GM13977 (cell line): ENCODE measurements at regions of chr2 and their contacts with region 1.

Region 1: DNA sequence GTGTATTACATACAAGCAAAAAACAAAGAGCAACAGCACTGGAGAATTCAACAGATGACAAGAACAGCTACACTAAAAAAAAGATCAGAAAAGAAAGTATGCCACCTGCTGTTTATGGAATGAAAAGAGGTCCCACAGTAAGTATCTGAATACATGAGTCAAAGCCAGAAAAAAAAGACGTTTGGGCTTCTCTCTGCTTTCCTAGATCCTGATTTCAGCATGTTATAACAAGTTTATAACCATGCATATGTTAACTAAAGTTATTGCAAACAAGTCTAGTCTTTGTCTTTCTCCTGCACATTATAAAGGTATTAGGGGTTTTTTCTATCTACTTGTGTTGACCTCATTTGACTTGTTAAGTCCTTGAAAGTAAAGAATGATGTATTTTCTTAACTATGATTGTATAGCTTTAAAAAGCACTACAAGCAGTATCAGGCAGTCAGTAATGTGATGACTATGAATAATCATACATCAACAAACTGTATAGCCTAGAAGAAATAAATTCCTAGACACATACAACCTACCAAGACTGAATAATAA is 108.5 kb upstream of the COL5A2 start:
- DNase-seq: peak; percentile 22
- CTCF ChIP-seq: peak; percentile 41

Region 2: DNA sequence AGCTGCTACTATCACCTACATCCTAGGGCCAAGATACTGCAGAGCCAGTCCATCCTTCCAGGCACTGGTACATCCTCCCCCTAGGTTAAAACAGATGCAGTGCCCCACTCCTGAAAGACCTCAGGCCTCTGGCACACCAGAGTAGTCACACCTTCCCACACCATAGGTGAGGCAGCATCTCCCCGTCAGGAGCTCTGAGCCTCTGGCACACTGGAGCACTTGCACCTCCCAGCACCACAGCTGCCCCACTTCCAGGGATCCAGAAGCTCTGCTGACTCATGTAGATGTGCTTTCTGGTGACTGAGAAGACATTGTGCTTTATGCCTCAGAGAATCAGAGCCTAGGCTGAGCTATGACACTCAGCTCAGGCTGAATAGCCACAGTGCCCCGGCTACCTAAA is 452.2 kb before region 1 on chr2:
- in situ Hi-C with region 1: no loop called
- DNase-seq: no peak
- CTCF ChIP-seq: no peak

Region 3: DNA sequence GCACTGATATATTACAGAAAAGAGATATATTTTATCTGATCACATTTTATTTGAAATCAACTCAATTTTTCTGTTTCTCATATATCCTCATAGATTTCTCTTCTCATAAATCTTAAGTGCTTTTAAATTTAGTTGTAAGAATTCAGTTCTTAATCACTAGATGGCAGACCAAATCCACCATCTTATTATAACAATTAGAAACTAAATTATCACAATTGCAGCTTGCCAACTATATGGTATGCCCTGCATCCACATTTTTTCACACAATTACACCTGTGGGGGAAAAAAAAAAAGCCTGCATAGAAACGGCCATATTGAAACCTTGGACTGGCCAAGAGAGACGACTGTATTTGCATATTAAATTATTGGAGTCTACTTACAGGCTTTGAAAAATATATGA is 172.9 kb before region 1 on chr2:
- in situ Hi-C with region 1: loop called (anchors 25 kb)
- DNase-seq: no peak
- CTCF ChIP-seq: peak; percentile 2

Region 4: GRCh38 chr2:189164746-189165145 is 123.3 kb before region 1 on chr2:
- in situ Hi-C with region 1: no loop called
- DNase-seq: no peak
- CTCF ChIP-seq: no peak